Activated CD4-positive, alpha-beta memory T cell treated with anti-CD3 and anti-CD28 coated beads for 36 hours (primary cell): ENCODE measurements at regions of chr19 and their contacts with region 1.

Region 1: GRCh38 chr19:54463531-54464043 is at the start of gene LENG9:
- DNase-seq: peak; percentile 99
- H3K4me3 Mint-ChIP-seq: peak within 1 kb of the TSS; percentile 78
- H3K27ac Mint-ChIP-seq: peak within 1 kb of the TSS; percentile 92
- H3K4me1 Mint-ChIP-seq: peaks cover 29% of the 10 kb centered on the region
- H3K27me3 Mint-ChIP-seq: no peaks in the 10 kb centered on the region
- total RNA-seq, gene LENG9: 5.3 to 5.6 TPM

Region 2: DNA sequence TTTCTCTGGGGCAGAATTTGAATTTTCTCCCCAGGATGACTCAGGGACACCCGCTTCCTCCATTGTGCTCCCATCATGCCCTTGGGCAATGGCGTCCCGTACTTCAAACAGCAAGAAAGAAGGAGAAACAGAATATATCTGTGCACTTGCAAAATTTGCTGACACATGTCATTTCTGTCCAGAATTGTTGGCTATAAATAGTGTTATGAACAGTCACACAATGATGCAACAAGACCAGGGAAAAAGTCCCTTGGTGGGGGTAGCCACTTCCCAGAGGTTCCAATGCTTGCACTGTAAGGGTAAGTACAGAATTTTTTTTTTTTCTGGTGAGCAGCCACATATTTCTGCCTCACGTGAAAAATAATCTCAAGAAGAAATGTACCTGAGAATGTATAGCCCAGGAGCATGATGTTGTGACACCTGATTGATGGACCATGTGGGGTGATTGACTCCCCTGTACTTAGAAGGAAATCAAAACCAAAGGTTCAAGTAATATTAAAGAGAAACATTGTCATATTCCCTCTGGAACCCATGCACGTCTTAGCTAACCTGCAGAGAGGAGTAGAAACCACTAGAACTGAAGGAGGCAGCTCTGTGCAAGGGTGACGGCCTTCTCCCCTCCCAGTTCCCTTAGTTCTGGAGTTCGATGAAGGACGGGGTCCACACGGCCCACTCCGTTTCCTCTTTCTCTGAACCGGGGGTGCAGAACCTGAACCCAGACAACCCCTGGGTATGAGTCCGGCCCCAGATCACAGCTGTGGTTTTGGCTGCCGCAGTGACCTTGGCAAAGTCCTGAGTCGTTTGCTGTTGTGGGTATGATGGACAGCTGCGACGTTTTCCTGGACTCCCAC is 89.6 kb before region 1 on chr19:
- CTCF ChIA-PET with region 1: no interaction called
- POLR2A ChIA-PET with region 1: no interaction called
- intact Hi-C with region 1: no loop called
- DNase-seq: no peak
- H3K4me3 Mint-ChIP-seq: no peak overlapping the region
- H3K27ac Mint-ChIP-seq: no peak overlapping the region
- H3K4me1 Mint-ChIP-seq: peaks cover 73% of the 10 kb centered on the region
- H3K27me3 Mint-ChIP-seq: peaks cover 18% of the 10 kb centered on the region

Region 3: DNA sequence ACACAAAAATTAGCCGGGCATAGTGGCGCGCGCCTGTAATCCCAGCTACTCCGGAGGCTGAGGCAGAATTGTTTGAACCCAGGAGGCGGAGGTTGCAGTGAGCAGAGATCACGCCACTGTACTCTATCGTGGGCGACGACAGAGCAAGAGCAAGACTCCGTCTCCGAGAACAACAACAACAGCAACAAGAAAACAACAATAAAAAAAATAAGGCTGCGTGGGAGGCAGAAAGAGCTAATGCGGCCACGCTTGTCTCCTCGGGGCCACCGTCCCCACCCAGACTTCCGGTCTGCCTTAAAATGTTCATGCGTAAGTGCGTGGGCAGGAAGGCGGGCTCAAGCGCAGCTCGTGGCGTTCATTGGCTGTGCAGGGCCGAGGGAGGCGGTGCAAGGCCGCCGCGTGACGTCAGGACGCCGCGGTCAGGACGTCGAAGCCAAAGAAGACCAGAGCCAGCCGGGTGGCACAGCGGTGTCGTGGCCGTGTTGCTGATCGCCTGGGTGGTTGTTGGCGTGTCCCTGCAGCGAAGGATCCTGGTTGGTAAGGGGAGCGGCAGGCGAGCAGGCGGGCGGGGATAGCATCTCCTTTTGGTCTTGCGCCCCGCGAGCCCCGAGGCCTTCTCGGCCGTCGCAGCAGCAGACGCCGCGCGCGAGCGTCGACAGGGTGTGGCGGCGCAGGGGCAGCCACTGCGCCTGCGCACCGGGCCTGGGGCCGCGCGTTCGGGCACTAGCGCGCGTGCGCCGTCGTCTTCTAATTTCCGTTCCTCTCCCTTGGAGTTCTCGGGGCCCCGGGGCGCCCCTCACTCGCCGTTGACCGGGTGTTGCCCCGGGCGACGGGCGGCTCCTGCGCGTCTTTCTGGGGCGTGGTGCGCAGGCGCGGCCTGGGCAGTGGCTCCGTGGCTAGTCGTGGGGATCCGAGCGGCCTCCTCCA is 14.6 kb before region 1 on chr19 and contains the start of gene LENG8:
- CTCF ChIA-PET with region 1: interaction called, 9 read pairs
- POLR2A ChIA-PET with region 1: interaction called, 31 read pairs
- intact Hi-C with region 1: loop called (anchors 1 kb)
- DNase-seq: peak; percentile 98
- H3K4me3 Mint-ChIP-seq: peak within 1 kb of the TSS; percentile 99
- H3K27ac Mint-ChIP-seq: peak within 1 kb of the TSS; percentile 99
- H3K4me1 Mint-ChIP-seq: peaks cover 43% of the 10 kb centered on the region
- H3K27me3 Mint-ChIP-seq: peaks cover 2% of the 10 kb centered on the region
- total RNA-seq, gene LENG8: 163 to 176 TPM